ENCODE measurements at regions of chr21 and their contacts with region 1.

Region 1: DNA sequence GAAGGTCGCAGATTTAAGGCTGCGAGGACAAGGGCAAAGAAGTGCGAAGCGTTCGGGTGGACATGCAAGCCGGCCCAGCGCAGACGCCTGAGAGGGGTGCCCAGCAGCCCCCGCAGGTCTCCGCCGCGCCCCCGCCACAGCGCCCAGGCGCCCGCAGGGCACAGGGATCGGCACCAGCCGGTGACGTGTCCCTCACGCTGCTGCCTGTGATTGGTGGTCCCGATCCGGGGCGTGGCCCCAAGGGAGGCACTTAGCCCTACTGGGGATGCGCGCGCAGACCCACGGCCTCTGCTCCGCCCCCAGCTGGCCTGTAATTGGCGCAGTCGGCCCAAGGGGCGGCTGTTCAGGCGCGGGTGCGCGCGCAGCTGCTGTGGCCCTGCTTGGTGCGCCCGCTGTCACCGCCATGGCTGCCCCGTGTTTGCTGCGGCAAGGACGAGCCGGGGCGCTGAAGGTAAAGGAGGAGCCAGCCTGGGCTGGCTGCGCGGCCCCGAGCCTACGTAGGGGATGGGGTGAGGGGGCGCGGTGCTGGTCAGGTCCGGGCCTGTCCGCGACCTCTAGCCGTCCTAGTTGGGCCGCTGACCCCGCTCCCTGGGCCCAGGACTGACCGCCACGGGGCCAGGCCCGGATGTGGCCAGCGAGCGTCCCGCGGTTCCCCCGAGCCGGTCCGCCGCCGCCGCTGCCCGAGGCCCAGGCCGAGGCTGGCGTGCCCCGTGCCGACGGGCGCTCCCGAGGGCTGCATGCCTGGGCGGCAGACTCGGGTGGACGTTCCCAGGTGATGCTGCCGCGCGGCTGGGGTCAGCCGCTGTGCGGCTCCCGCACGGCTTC is at the start of gene NDUFV3:
- DNase-seq: peak; percentile 93 to 100 (median 100)
- ATAC-seq: peak; percentile 92 to 93
- H3K4me3 Mint-ChIP-seq: peak within 1 kb of the TSS; percentile 84 to 98 (median 90)
- H3K27ac Mint-ChIP-seq: peak within 1 kb of the TSS; percentile 93 to 99 (median 97)
- H3K4me1 Mint-ChIP-seq: peaks cover 12 to 25% (median 20%) of the 10 kb centered on the region in 4 donors
- H3K27me3 Mint-ChIP-seq: no peaks in the 10 kb centered on the region
- polyA plus RNA-seq, gene NDUFV3: 10.2 to 27.2 (median 23.0) TPM

Region 2: DNA sequence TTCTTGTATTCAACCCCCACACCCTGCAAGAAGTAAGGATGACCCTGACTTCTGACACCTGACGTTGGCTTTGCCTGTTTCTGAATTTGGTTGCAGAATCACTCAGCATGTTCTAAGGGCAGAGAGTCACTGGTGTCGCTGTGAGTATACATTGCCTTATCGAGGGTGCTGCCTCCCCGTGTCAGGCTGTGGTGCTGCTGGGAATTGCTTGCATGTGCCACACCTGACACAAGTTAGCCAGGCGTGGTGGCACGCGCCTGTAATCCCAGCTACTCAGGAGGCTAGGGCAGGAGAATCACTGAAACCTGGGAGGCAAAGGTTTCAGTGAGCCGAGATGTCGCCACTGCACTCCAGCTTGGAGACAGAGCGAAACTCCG is 59.7 kb before region 1 on chr21:
- POLR2A ChIA-PET with region 1: no interaction called
- DNase-seq: peak in 8 of 10 donors; percentile 30 to 83 (median 58)
- ATAC-seq: peak; percentile 76 to 83
- H3K4me3 Mint-ChIP-seq: peak overlapping the region; percentile 66 to 86 (median 80)
- H3K27ac Mint-ChIP-seq: peak overlapping the region; percentile 47 to 93 (median 82)
- H3K4me1 Mint-ChIP-seq: peaks cover 28 to 42% (median 38%) of the 10 kb centered on the region in 4 donors
- H3K27me3 Mint-ChIP-seq: peaks cover 0 to 2% (median 0%) of the 10 kb centered on the region in 5 donors

Region 3: DNA sequence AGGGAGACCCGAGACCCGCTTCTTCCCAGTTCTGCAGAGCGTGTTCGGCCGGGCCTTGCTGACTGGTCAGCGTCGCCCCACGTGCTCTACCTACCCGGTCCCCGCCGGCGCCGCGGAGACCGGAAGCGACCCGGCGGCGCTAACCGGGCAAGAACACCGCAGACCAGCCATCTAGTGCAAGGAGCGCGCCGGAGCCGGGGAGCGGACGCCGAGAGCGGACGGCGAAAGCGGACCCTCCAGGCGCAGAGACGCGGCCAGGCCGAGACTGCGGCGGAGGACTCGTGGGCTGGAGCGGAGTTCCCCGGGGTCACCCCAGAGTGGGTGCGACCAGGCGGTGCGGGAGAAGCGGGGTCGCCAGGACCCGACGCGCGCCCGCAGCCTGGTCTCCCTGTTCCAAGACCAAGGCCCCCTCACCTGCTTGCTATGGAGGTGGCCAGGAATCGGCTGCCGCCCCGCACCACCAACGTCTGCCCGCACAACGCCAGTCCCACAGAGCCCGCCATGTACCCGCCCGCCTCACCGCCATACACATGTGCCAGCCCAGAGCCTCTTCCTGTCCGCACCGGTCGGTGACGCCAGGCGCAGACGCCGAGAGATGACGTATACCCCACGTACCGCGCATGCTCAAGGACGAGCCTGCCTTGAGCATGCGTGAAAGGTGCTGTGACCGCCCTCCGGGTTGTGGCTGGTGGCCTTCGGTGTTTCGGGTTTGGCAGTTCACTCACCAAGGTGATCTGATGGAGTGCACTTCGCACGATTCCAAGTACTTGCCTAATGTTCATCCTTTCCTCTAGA is 14.0 kb before region 1 on chr21 and contains the start of gene WDR4:
- POLR2A ChIA-PET with region 1: interaction called, 31 read pairs
- DNase-seq: peak; percentile 92 to 100 (median 99)
- ATAC-seq: peak; percentile 92 to 93
- H3K4me3 Mint-ChIP-seq: peak within 1 kb of the TSS; percentile 90 to 98 (median 94)
- H3K27ac Mint-ChIP-seq: peak within 1 kb of the TSS; percentile 96 to 100 (median 99)
- H3K4me1 Mint-ChIP-seq: peaks cover 13 to 30% (median 27%) of the 10 kb centered on the region in 4 donors
- H3K27me3 Mint-ChIP-seq: peaks cover 0 to 2% (median 0%) of the 10 kb centered on the region in 5 donors
- polyA plus RNA-seq, gene WDR4: 6.9 to 9.9 (median 9.3) TPM

Region 4: DNA sequence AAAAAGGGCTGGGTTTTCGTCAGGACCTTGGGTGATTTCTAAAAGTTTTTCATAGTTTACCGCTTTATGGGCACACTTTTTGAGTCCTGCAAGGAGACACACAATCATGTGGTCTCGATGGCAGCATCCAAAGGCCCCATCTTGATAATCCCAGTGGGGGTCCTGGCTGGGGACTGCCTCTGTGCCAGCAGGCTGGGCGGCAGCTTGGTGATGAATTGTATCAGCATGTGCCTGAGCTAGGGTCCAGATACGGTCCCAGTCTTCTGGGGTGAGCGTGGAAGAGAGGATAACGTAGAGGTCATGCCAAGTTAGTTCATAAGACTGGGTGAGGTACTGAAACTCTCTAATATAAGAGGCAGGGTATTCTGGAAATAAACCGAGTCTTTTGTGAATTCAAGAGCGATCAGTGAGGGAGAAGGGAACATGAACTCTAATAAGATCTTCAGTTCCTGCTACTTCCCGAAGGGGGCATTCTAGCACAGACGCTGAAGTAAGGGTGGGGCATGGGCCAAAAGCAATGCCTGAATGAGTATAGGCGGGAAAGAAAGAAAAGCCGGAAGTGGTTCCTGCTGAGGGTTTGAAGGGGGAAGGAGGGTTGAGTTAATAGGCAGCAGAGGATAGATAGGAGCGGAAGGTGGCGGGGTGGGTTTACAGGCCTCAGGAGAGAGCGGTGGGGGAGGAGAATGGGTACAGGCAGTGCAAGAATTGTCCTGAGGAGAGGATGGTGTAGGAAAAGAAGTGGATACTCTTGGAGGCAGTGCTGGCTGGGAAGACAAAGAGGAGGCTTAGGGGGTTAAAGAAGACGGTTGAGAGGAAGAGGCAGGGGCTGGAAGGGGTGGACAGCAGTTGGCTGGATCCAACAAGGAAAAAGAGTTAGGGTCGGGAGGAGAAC is 30.6 kb after region 1 on chr21:
- POLR2A ChIA-PET with region 1: no interaction called
- DNase-seq: peak; percentile 16 to 85 (median 67)
- ATAC-seq: peak; percentile 94 to 95
- H3K4me3 Mint-ChIP-seq: peak overlapping the region in 7 of 10 donors; percentile 5 to 79 (median 37)
- H3K27ac Mint-ChIP-seq: peak overlapping the region; percentile 18 to 84 (median 74)
- H3K4me1 Mint-ChIP-seq: peaks cover 11 to 18% (median 16%) of the 10 kb centered on the region in 4 donors
- H3K27me3 Mint-ChIP-seq: no peaks in the 10 kb centered on the region

Region 5: GRCh38 chr21:42973991-42974831 is 81.1 kb after region 1 on chr21 and contains the start of gene PKNOX1:
- POLR2A ChIA-PET with region 1: interaction called, 14 read pairs
- DNase-seq: peak; percentile 96 to 100 (median 99)
- ATAC-seq: peak; percentile 84 to 85
- H3K4me3 Mint-ChIP-seq: peak within 1 kb of the TSS; percentile 78 to 93 (median 88)
- H3K27ac Mint-ChIP-seq: peak within 1 kb of the TSS; percentile 84 to 97 (median 93)
- H3K4me1 Mint-ChIP-seq: peaks cover 8 to 35% (median 32%) of the 10 kb centered on the region in 4 donors
- H3K27me3 Mint-ChIP-seq: no peaks in the 10 kb centered on the region
- polyA plus RNA-seq, gene PKNOX1: 16.2 to 18.6 (median 17.9) TPM

Region 6: GRCh38 chr21:42988236-42988965 is 95.3 kb after region 1 on chr21:
- POLR2A ChIA-PET with region 1: no interaction called
- DNase-seq: no peak
- ATAC-seq: no peak
- H3K4me3 Mint-ChIP-seq: no peak overlapping the region
- H3K27ac Mint-ChIP-seq: no peak overlapping the region
- H3K4me1 Mint-ChIP-seq: peaks cover 7 to 35% (median 17%) of the 10 kb centered on the region in 4 donors
- H3K27me3 Mint-ChIP-seq: no peaks in the 10 kb centered on the region

Measured in naive thymus-derived CD8-positive, alpha-beta T cell (primary cell).